CD4-positive, alpha-beta T cell (primary cell): ENCODE measurements at regions of chr3 and their contacts with region 1.

Region 1: DNA sequence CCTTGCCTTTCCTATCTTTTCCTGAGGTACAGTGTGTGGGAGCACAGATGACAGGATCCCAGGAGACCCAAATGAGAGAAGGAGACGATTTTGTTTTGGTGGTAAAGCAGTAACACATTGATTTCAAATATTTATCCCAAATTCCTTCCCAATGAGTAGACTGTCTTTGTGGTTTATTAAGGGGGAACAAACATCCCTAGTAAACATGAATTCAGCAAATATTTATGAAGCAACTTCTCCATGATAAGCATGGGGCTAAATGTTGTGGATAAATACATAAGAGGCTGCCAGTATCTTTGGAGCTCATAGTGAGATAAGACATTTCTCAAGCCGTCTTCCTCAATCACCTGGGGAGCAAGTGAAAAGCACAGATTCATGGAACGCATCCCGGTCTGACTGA is 460.8 kb upstream of the CFAP20DC start:
- DNase-seq: no peak
- ATAC-seq: no peak
- H3K4me3 ChIP-seq: no peak overlapping the region
- H3K4me3 Mint-ChIP-seq: no peak overlapping the region
- H3K27ac ChIP-seq: no peak overlapping the region
- H3K27ac Mint-ChIP-seq: no peak overlapping the region
- H3K4me1 ChIP-seq: no peaks in the 10 kb centered on the region
- H3K4me1 Mint-ChIP-seq: peaks cover 9% of the 10 kb centered on the region
- H3K27me3 ChIP-seq: no peaks in the 10 kb centered on the region
- H3K27me3 Mint-ChIP-seq: no peaks in the 10 kb centered on the region
- CTCF ChIP-seq: no peak

Region 2: GRCh38 chr3:59313365-59313764 is 197.2 kb before region 1 on chr3:
- CTCF ChIA-PET with region 1: no interaction called
- POLR2A ChIA-PET with region 1: no interaction called
- intact Hi-C with region 1: no loop called
- DNase-seq: peak in 8 of 14 experiments; percentile 2 to 51 (median 28)
- ATAC-seq: peak; percentile 62
- H3K4me3 ChIP-seq: no peak overlapping the region
- H3K4me3 Mint-ChIP-seq: no peak overlapping the region
- H3K27ac ChIP-seq: no peak overlapping the region
- H3K27ac Mint-ChIP-seq: no peak overlapping the region
- H3K4me1 ChIP-seq: no peaks in the 10 kb centered on the region
- H3K4me1 Mint-ChIP-seq: peaks cover 11% of the 10 kb centered on the region
- H3K27me3 ChIP-seq: no peaks in the 10 kb centered on the region
- H3K27me3 Mint-ChIP-seq: no peaks in the 10 kb centered on the region
- CTCF ChIP-seq: peak; percentile 46

Region 3: DNA sequence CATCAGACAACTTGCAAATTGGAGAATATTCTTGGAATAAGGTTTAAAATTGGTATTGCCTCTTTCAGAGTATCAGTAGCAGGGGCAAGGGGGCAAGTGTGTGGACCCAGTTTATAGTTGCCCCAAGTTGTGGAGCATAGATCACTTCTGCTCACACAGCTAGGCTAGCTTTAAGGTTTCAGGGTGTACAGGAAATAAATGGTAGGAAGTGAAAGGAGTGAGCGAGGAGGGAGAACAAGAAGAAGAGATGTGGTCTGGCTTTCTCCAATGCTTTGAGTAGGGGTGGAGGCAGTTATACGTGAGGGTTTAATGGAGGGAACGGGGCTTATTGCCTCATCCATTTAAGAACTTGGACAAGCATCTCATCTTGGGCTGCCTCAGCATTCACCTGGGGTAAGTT is 170.8 kb before region 1 on chr3:
- CTCF ChIA-PET with region 1: no interaction called
- POLR2A ChIA-PET with region 1: no interaction called
- intact Hi-C with region 1: loop called in 1 of 2 experiments (anchors 5 kb)
- DNase-seq: no peak
- ATAC-seq: no peak
- H3K4me3 ChIP-seq: no peak overlapping the region
- H3K4me3 Mint-ChIP-seq: no peak overlapping the region
- H3K27ac ChIP-seq: no peak overlapping the region
- H3K27ac Mint-ChIP-seq: no peak overlapping the region
- H3K4me1 ChIP-seq: peaks cover 6% of the 10 kb centered on the region
- H3K4me1 Mint-ChIP-seq: peaks cover 8% of the 10 kb centered on the region
- H3K27me3 ChIP-seq: no peaks in the 10 kb centered on the region
- H3K27me3 Mint-ChIP-seq: no peaks in the 10 kb centered on the region
- CTCF ChIP-seq: no peak

Region 4: GRCh38 chr3:59545374-59545773 is 34.8 kb after region 1 on chr3:
- CTCF ChIA-PET with region 1: no interaction called
- POLR2A ChIA-PET with region 1: no interaction called
- intact Hi-C with region 1: no loop called
- DNase-seq: no peak
- ATAC-seq: no peak
- H3K4me3 ChIP-seq: no peak overlapping the region
- H3K4me3 Mint-ChIP-seq: no peak overlapping the region
- H3K27ac ChIP-seq: no peak overlapping the region
- H3K27ac Mint-ChIP-seq: no peak overlapping the region
- H3K4me1 ChIP-seq: peaks cover 9% of the 10 kb centered on the region
- H3K4me1 Mint-ChIP-seq: peaks cover 38% of the 10 kb centered on the region
- H3K27me3 ChIP-seq: no peaks in the 10 kb centered on the region
- H3K27me3 Mint-ChIP-seq: no peaks in the 10 kb centered on the region
- CTCF ChIP-seq: no peak

Region 5: DNA sequence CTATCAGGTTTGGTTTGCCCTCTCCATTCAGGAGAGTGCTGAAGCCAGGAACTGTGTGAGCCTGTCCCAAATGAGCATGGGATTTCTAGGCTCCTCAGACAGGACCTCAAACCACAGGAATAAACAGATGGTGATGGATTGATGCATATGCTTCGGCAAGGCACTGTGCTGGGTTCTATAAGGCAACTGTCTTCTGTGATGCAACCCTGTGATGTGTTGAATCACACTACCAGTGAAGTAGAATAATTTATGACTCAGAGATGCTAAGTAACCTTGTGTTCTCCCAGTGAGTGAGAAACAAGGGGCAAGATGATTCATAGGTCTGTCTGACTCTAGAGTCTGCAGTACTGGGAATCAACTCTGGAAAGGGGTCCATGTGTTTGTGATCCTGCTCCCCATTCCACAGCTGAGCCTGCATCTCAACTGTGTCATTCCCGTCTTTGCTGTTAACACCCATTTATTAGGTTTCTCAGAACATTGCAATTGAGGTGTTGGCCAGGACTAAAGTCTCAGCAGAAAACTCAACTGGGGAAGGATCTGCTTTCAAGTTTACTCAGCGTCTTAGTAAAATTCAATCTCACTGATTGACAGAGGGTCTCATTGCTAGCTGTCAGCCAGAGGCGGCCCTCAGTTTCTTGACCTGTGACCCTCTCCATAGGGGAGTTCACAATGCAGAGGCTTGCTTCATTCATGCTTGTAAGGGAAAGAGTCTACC is 49.3 kb after region 1 on chr3:
- CTCF ChIA-PET with region 1: no interaction called
- POLR2A ChIA-PET with region 1: no interaction called
- intact Hi-C with region 1: no loop called
- DNase-seq: peak in 1 of 14 experiments; percentile 21
- ATAC-seq: no peak
- H3K4me3 ChIP-seq: no peak overlapping the region
- H3K4me3 Mint-ChIP-seq: no peak overlapping the region
- H3K27ac ChIP-seq: no peak overlapping the region
- H3K27ac Mint-ChIP-seq: no peak overlapping the region
- H3K4me1 ChIP-seq: no peaks in the 10 kb centered on the region
- H3K4me1 Mint-ChIP-seq: peaks cover 20% of the 10 kb centered on the region
- H3K27me3 ChIP-seq: no peaks in the 10 kb centered on the region
- H3K27me3 Mint-ChIP-seq: no peaks in the 10 kb centered on the region
- CTCF ChIP-seq: no peak

Region 6: GRCh38 chr3:60456180-60456579 is 945.6 kb after region 1 on chr3:
- CTCF ChIA-PET with region 1: no interaction called
- POLR2A ChIA-PET with region 1: no interaction called
- intact Hi-C with region 1: no loop called
- DNase-seq: no peak
- ATAC-seq: no peak
- H3K4me3 ChIP-seq: no peak overlapping the region
- H3K4me3 Mint-ChIP-seq: no peak overlapping the region
- H3K27ac ChIP-seq: no peak overlapping the region
- H3K27ac Mint-ChIP-seq: no peak overlapping the region
- H3K4me1 ChIP-seq: no peaks in the 10 kb centered on the region
- H3K4me1 Mint-ChIP-seq: peaks cover 5% of the 10 kb centered on the region
- H3K27me3 ChIP-seq: no peaks in the 10 kb centered on the region
- H3K27me3 Mint-ChIP-seq: no peaks in the 10 kb centered on the region
- CTCF ChIP-seq: no peak